ENCODE measurements at regions of chrX and their contacts with region 1.

Region 1: DNA sequence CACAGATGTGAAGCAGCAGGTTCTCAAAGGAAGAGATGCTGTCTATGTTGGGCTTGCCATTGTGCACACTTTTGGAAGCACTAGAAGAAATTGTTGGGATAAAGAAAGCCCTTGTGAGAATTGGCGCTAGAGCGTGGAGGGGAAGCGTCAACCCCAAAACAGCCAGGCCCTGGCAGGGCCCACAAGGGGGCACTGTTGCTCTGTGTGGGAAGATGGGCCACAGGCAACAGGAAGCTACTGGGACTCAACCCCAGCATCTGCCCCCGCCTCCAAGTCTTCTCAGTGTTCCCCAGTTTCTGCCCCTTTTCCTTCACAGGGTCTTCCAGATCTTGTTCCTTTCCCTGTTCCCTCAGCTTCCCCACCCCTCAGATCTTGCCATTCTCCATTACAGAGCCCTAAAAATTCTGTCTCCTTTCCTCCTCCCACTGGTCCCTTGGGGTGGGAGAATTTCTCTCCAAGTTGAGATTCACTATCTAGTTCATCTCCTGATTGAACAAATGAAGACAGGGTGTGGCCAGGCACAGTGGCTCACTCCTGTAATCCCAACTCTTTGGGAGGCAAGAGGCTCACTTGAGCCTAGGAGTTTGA is 85.5 kb downstream of the STARD8 start:
- DNase-seq: peak; percentile 41
- H3K4me3 Mint-ChIP-seq: no peak overlapping the region
- H3K27ac Mint-ChIP-seq: no peak overlapping the region
- H3K4me1 Mint-ChIP-seq: no peaks in the 10 kb centered on the region
- H3K27me3 Mint-ChIP-seq: peaks cover 1% of the 10 kb centered on the region

Region 2: GRCh38 chrX:68332201-68332731 is 400.7 kb before region 1 on chrX:
- intact Hi-C with region 1: no loop called
- DNase-seq: no peak
- H3K4me3 Mint-ChIP-seq: no peak overlapping the region
- H3K27ac Mint-ChIP-seq: no peak overlapping the region
- H3K4me1 Mint-ChIP-seq: no peaks in the 10 kb centered on the region
- H3K27me3 Mint-ChIP-seq: no peaks in the 10 kb centered on the region

Region 3: GRCh38 chrX:68807818-68808217 is 74.8 kb after region 1 on chrX:
- intact Hi-C with region 1: loop called (anchors 1 kb)
- DNase-seq: no peak
- H3K4me3 Mint-ChIP-seq: no peak overlapping the region
- H3K27ac Mint-ChIP-seq: no peak overlapping the region
- H3K4me1 Mint-ChIP-seq: no peaks in the 10 kb centered on the region
- H3K27me3 Mint-ChIP-seq: peaks cover 6% of the 10 kb centered on the region

Region 4: GRCh38 chrX:68822641-68823410 is 89.8 kb after region 1 on chrX:
- intact Hi-C with region 1: loop called (anchors 1 kb)
- DNase-seq: no peak
- H3K4me3 Mint-ChIP-seq: no peak overlapping the region
- H3K27ac Mint-ChIP-seq: no peak overlapping the region
- H3K4me1 Mint-ChIP-seq: peaks cover 8% of the 10 kb centered on the region
- H3K27me3 Mint-ChIP-seq: peaks cover 2% of the 10 kb centered on the region

Measured in activated T-helper 1 cell treated with anti-CD3 and anti-CD28 coated beads, Interleukin-12 subunit alpha, Interleukin-12 subunit beta, Interleukin-2, Interleukin-4 antibody, amounts not matched to agents 30 ng/mL and 10 ng/mL and 1 ng/mL, durations not matched to agents 14 hours and 24 hours and 36 hours (primary cell).